Caco-2 (cell line): ENCODE measurements at regions of chr2 and their contacts with region 1.

Region 1: DNA sequence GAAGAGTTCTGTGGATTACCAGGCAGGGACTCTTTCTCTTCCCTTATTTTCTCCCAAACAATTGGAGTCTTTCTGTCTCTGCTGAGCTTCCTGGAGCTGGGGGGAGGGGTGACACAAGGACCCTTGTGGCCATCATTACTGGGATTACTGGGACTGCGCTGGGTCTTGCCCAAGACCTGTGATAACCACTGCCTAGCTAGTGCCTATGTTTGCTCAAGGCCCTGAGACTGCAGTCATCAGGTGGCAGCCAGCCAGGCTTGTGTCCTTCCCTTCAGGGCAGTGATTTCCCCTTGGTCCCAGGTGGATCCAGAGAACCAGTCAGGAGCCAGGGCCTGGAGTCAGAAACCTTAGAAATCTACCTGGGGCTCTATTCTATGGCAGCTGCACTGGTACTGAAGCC is 355.6 kb downstream of the PARD3B start:
- DNase-seq: peak; percentile 80 to 86
- H3K4me3 ChIP-seq: no peak overlapping the region
- H3K4me3 Mint-ChIP-seq: peak overlapping the region; percentile 48
- H3K27ac Mint-ChIP-seq: peak overlapping the region; percentile 77
- H3K4me1 ChIP-seq: peaks cover 26% of the 10 kb centered on the region
- H3K4me1 Mint-ChIP-seq: peaks cover 44% of the 10 kb centered on the region
- H3K27me3 ChIP-seq: no peaks in the 10 kb centered on the region
- H3K27me3 Mint-ChIP-seq: no peaks in the 10 kb centered on the region
- CTCF ChIP-seq: no peak

Region 2: GRCh38 chr2:204260162-204260877 is 640.6 kb before region 1 on chr2:
- CTCF ChIA-PET with region 1: no interaction called
- POLR2A ChIA-PET with region 1: no interaction called
- intact Hi-C with region 1: no loop called
- DNase-seq: peak; percentile 71 to 75
- H3K4me3 ChIP-seq: no peak overlapping the region
- H3K4me3 Mint-ChIP-seq: no peak overlapping the region
- H3K27ac Mint-ChIP-seq: no peak overlapping the region
- H3K4me1 ChIP-seq: peaks cover 9% of the 10 kb centered on the region; the same call in 1 of the 2 replicates
- H3K4me1 Mint-ChIP-seq: peaks cover 26% of the 10 kb centered on the region
- H3K27me3 ChIP-seq: no peaks in the 10 kb centered on the region
- H3K27me3 Mint-ChIP-seq: no peaks in the 10 kb centered on the region
- CTCF ChIP-seq: peak; percentile 81 to 88

Region 3: GRCh38 chr2:204340511-204340910 is 560.4 kb before region 1 on chr2:
- CTCF ChIA-PET with region 1: no interaction called
- POLR2A ChIA-PET with region 1: no interaction called
- intact Hi-C with region 1: loop called (anchors 5 kb)
- DNase-seq: no peak
- H3K4me3 ChIP-seq: no peak overlapping the region
- H3K4me3 Mint-ChIP-seq: peak overlapping the region; percentile 48
- H3K27ac Mint-ChIP-seq: peak overlapping the region; percentile 80
- H3K4me1 ChIP-seq: peaks cover 41% of the 10 kb centered on the region
- H3K4me1 Mint-ChIP-seq: peaks cover 45% of the 10 kb centered on the region
- H3K27me3 ChIP-seq: no peaks in the 10 kb centered on the region
- H3K27me3 Mint-ChIP-seq: no peaks in the 10 kb centered on the region
- CTCF ChIP-seq: no peak

Region 4: GRCh38 chr2:204749319-204749718 is 151.6 kb before region 1 on chr2:
- CTCF ChIA-PET with region 1: no interaction called
- POLR2A ChIA-PET with region 1: no interaction called
- intact Hi-C with region 1: no loop called
- DNase-seq: no peak
- H3K4me3 ChIP-seq: no peak overlapping the region
- H3K4me3 Mint-ChIP-seq: no peak overlapping the region
- H3K27ac Mint-ChIP-seq: no peak overlapping the region
- H3K4me1 ChIP-seq: no peaks in the 10 kb centered on the region
- H3K4me1 Mint-ChIP-seq: no peaks in the 10 kb centered on the region
- H3K27me3 ChIP-seq: no peaks in the 10 kb centered on the region
- H3K27me3 Mint-ChIP-seq: no peaks in the 10 kb centered on the region
- CTCF ChIP-seq: no peak

Region 5: GRCh38 chr2:204948024-204948763 is 47.3 kb after region 1 on chr2:
- CTCF ChIA-PET with region 1: no interaction called
- POLR2A ChIA-PET with region 1: no interaction called
- intact Hi-C with region 1: loop called (anchors 1 kb)
- DNase-seq: no peak
- H3K4me3 ChIP-seq: no peak overlapping the region
- H3K4me3 Mint-ChIP-seq: peak overlapping the region; percentile 8
- H3K27ac Mint-ChIP-seq: peak overlapping the region; percentile 61
- H3K4me1 ChIP-seq: peaks cover 41% of the 10 kb centered on the region
- H3K4me1 Mint-ChIP-seq: peaks cover 42% of the 10 kb centered on the region
- H3K27me3 ChIP-seq: no peaks in the 10 kb centered on the region
- H3K27me3 Mint-ChIP-seq: no peaks in the 10 kb centered on the region
- CTCF ChIP-seq: no peak

Region 6: GRCh38 chr2:204972606-204973336 is 71.9 kb after region 1 on chr2:
- CTCF ChIA-PET with region 1: no interaction called
- POLR2A ChIA-PET with region 1: no interaction called
- intact Hi-C with region 1: no loop called
- DNase-seq: peak in 1 of 2 experiments; percentile 12
- H3K4me3 ChIP-seq: no peak overlapping the region
- H3K4me3 Mint-ChIP-seq: no peak overlapping the region
- H3K27ac Mint-ChIP-seq: peak overlapping the region; percentile 74
- H3K4me1 ChIP-seq: peaks cover 27% of the 10 kb centered on the region
- H3K4me1 Mint-ChIP-seq: peaks cover 18% of the 10 kb centered on the region
- H3K27me3 ChIP-seq: no peaks in the 10 kb centered on the region
- H3K27me3 Mint-ChIP-seq: no peaks in the 10 kb centered on the region
- CTCF ChIP-seq: no peak